ENCODE measurements at regions of chr1 and their contacts with region 1.

Region 1: DNA sequence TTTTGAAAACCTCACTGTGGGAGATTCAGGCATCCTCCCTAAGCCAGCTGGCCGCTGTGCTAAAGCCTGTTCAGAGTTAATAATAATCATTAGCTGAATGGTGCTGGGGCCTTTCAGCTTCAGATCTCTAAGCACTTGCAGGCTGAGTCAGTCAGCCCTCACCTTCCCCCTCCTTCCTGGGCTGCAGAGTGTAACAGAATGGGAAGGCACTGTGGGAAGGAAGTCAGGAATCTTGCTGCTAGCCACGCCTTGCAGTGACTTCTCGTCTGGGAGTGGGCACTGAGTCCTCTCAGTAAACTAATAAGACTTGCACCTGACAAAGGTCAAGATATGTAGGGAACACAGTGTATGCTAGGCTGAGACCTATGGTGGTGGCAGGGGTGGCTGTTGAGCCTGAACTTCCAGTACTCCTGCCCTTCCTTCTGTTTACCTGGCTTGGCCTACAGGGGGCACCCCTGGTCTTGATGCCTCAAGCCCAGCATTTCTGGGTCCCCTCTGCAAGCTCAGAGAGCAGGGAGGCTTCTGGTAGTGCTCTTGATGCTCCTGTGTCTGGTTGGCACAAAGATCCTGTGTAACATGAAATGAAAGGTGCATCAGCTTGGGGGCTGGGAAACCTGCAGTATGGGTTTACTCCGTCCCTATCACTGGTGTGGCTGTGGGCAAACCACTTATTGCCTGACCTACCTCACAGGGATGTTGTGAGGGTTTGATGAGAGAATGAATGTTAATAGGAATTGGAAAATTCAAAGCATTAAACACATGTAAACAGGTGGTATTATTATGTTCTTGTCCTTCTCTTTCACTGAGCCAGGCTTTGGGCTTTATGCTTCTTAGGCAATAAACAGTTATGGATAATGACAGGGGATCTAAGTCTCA is 6.0 kb downstream of the CYB561D1 start:
- DNase-seq: no peak
- ATAC-seq: no peak
- H3K4me3 ChIP-seq: no peak overlapping the region
- H3K27ac ChIP-seq: peak overlapping the region in 1 of 2 donors; percentile 86
- H3K4me1 ChIP-seq: peaks cover 0 to 3% of the 10 kb centered on the region in 2 donors
- H3K27me3 ChIP-seq: no peaks in the 10 kb centered on the region

Region 2: GRCh38 chr1:109610609-109611307 is 110.9 kb after region 1 on chr1:
- intact Hi-C with region 1: loop called in 1 of 2 experiments (anchors 5 kb)
- DNase-seq: no peak
- ATAC-seq: no peak
- H3K4me3 ChIP-seq: no peak overlapping the region
- H3K27ac ChIP-seq: no peak overlapping the region
- H3K4me1 ChIP-seq: peaks cover 0 to 1% of the 10 kb centered on the region in 2 donors
- H3K27me3 ChIP-seq: no peaks in the 10 kb centered on the region

Measured in aorta (tissue), 5 donors.